Heart left ventricle (tissue), 16 donors: ENCODE measurements at regions of chr7 and their contacts with region 1.

Region 1: DNA sequence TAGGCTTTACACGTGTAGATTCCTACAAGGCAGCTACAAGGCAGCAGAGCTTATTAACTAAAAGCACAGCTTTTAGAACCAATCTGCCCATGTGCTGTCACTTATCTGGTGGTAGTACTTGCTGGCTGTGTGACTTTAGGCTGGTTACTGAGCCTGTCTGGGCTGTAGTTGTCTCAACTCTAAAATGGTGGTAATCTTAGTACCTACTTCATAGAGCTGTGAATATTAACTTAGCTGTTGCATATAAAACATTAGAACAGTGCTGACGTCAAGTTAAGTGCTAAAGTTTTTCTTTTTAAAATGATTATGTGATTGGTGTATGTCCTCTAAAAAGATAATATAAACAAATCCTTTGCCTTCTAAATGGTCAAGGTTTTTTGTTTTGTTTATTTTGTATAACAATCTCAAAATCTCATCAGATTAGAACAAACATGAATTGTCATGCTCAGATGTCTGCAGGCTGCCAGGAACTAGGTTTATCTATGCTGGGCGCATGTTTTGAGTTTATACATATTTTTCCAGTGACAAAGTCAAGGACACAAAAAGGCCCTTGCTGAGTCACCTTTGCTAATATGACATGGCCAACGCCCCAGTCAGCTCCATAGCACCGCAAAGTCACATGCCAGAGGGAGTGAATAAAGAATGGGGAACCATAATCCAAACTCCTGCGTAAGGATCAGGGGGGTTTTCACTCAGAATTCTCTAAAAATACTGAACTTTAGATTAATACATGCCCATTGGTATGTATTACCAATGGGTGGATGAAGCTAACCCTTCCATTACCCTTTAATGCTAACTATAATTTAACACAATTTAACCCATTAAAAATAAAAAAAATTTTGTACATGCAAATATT is 39.8 kb upstream of the ARL4A start:
- DNase-seq: no peak
- ATAC-seq: no peak
- H3K4me3 ChIP-seq: no peak overlapping the region
- H3K27ac ChIP-seq: no peak overlapping the region
- H3K4me1 ChIP-seq: no peaks in the 10 kb centered on the region
- H3K27me3 ChIP-seq: no peaks in the 10 kb centered on the region
- CTCF ChIP-seq: no peak
- POLR2A ChIP-seq: no peak

Region 2: DNA sequence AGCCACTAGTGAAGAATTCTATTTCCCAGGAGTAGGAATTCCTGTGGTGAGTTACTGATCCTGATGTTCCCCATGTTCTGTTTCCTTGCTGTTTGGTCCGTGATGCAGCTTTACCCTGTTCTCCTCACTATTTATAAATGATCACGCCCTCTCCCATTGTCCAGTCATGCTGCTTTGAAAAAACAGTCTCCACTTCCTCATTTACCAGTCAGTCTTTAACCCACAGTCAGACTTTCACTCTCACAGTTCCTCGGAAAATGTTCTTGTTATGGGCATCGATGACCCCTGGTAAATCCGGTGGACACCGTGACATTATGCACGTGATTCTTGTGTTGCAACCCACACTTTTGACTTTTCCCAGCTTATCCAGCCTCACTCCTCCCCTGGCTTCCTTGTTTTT is 62.7 kb before region 1 on chr7:
- intact Hi-C with region 1: loop called in 1 of 10 experiments (anchors 10 kb)
- DNase-seq: no peak
- ATAC-seq: peak in 3 of 4 donors; percentile 36 to 70 (median 62)
- H3K4me3 ChIP-seq: no peak overlapping the region
- H3K27ac ChIP-seq: peak overlapping the region in 1 of 12 donors; percentile 24
- H3K4me1 ChIP-seq: peaks cover 0 to 30% (median 0%) of the 10 kb centered on the region in 12 donors
- H3K27me3 ChIP-seq: no peaks in the 10 kb centered on the region
- CTCF ChIP-seq: no peak
- POLR2A ChIP-seq: no peak

Region 3: GRCh38 chr7:12674849-12675248 is 27.3 kb after region 1 on chr7:
- intact Hi-C with region 1: loop called in 1 of 10 experiments (anchors 5 kb)
- DNase-seq: no peak
- ATAC-seq: peak in 2 of 4 donors; percentile 36 to 41
- H3K4me3 ChIP-seq: no peak overlapping the region
- H3K27ac ChIP-seq: no peak overlapping the region
- H3K4me1 ChIP-seq: peaks cover 0 to 17% (median 0%) of the 10 kb centered on the region in 12 donors
- H3K27me3 ChIP-seq: no peaks in the 10 kb centered on the region
- CTCF ChIP-seq: peak in 10 of 12 donors; percentile 14 to 50 (median 34)
- POLR2A ChIP-seq: no peak

Region 4: DNA sequence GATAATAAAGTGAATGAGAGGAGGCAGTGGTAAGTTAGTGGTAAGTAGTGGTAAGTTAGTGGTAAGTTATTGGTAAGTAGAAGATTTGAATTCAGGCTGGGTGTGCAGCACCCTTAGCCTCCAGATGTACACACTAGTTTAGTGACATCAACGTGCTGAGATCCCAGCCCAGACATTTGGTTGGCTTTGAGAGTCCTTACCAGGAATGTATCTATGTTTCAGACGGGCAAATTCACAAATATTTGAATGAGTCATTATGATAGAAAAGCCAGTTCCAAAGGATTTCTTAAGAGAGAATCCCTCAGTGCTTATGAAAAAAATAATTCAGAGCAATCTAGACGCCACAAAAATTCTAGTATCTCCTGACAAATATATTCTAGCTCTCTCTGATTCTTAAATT is 109.9 kb after region 1 on chr7:
- intact Hi-C with region 1: no loop called
- DNase-seq: no peak
- ATAC-seq: peak in 1 of 4 donors; percentile 48
- H3K4me3 ChIP-seq: no peak overlapping the region
- H3K27ac ChIP-seq: no peak overlapping the region
- H3K4me1 ChIP-seq: peaks cover 0 to 5% (median 0%) of the 10 kb centered on the region in 12 donors
- H3K27me3 ChIP-seq: no peaks in the 10 kb centered on the region
- CTCF ChIP-seq: no peak
- POLR2A ChIP-seq: no peak